Activated naive CD4-positive, alpha-beta T cell treated with anti-CD3 and anti-CD28 coated beads for 36 hours (primary cell): ENCODE measurements at regions of chr1 and their contacts with region 1.

Region 1: GRCh38 chr1:209207701-209208286 is 375.7 kb upstream of the CAMK1G start:
- DNase-seq: peak; percentile 45
- H3K4me3 Mint-ChIP-seq: no peak overlapping the region
- H3K27ac Mint-ChIP-seq: no peak overlapping the region
- H3K4me1 Mint-ChIP-seq: peaks cover 2% of the 10 kb centered on the region
- H3K27me3 Mint-ChIP-seq: peaks cover 32% of the 10 kb centered on the region

Region 2: DNA sequence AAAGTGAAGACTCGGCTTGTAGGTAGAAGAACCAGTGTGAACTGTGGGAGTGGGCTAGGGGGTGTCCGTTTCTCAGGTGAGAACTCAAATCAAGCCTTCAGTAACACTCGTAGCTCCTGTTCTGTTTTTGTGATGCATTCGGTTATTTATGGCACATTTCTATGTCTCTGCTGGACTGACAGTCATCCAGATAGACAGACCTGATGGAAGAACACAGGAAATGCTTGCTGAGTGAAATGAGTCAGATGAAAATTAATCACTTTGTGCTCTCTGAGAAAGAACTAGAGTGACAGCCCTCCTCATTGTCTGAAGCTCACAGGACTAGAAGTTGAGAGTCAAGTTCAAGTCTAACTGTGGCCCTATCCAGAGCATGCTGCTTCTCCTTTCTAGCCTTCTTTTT is 603.5 kb before region 1 on chr1:
- CTCF ChIA-PET with region 1: no interaction called
- intact Hi-C with region 1: no loop called
- DNase-seq: peak; percentile 6
- H3K4me3 Mint-ChIP-seq: no peak overlapping the region
- H3K27ac Mint-ChIP-seq: no peak overlapping the region
- H3K4me1 Mint-ChIP-seq: peaks cover 3% of the 10 kb centered on the region
- H3K27me3 Mint-ChIP-seq: peaks cover 12% of the 10 kb centered on the region

Region 3: GRCh38 chr1:208652296-208653160 is 555.3 kb before region 1 on chr1:
- CTCF ChIA-PET with region 1: interaction called, 5 read pairs
- intact Hi-C with region 1: loop called (anchors 5 kb)
- DNase-seq: peak; percentile 41
- H3K4me3 Mint-ChIP-seq: no peak overlapping the region
- H3K27ac Mint-ChIP-seq: no peak overlapping the region
- H3K4me1 Mint-ChIP-seq: no peaks in the 10 kb centered on the region
- H3K27me3 Mint-ChIP-seq: peaks cover 14% of the 10 kb centered on the region

Region 4: GRCh38 chr1:209513226-209513625 is 305.4 kb after region 1 on chr1:
- CTCF ChIA-PET with region 1: no interaction called
- intact Hi-C with region 1: loop called (anchors 5 kb)
- DNase-seq: no peak
- H3K4me3 Mint-ChIP-seq: no peak overlapping the region
- H3K27ac Mint-ChIP-seq: no peak overlapping the region
- H3K4me1 Mint-ChIP-seq: no peaks in the 10 kb centered on the region
- H3K27me3 Mint-ChIP-seq: peaks cover 11% of the 10 kb centered on the region